Endothelial cell of umbilical vein (primary cell): ENCODE measurements at regions of chr9 and their contacts with region 1.

Region 1: DNA sequence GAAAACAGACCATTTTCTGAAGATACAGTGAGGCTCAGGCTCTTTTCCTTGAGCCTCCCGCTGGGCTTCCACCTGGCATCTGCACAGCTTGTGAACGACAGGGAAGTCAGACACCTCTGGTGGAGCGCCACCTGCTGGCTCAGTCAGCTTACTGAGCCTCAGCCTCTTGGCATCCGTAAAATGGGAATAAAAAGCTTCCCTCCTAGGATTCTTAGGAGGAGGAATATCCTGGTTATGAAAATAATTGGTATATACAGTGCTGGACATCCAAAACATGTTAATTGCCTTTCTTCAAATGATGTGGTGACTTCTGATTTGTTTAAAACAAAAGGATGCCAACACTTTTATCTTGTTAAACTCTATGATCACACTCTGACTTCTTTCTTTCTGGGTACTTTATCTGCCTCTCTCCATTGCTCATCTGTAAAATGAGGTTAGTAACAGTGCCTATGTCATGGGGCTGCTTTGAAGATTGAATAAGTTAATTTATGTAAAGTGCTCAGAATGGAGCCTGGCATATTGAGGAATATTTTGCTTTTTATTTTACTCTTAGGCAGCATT is 67.5 kb downstream of the MAMDC2 start:
- DNase-seq: peak; percentile 73
- H3K4me3 ChIP-seq: no peak overlapping the region
- H3K27ac ChIP-seq: no peak overlapping the region
- H3K4me1 ChIP-seq: peaks cover 19% of the 10 kb centered on the region
- H3K27me3 ChIP-seq: peaks cover 3 to 4% of the 10 kb centered on the region in 2 experiments
- CTCF ChIP-seq: peak; percentile 88 to 94
- POLR2A ChIP-seq: no peak

Region 2: GRCh38 chr9:69919461-69920061 is 191.6 kb before region 1 on chr9:
- CTCF ChIA-PET with region 1: interaction called, 12 read pairs
- POLR2A ChIA-PET with region 1: no interaction called
- dilution Hi-C with region 1: no loop called
- intact Hi-C with region 1: no loop called
- DNase-seq: peak; percentile 60
- H3K4me3 ChIP-seq: no peak overlapping the region
- H3K27ac ChIP-seq: no peak overlapping the region
- H3K4me1 ChIP-seq: peaks cover 5% of the 10 kb centered on the region
- H3K27me3 ChIP-seq: peaks cover 29 to 39% of the 10 kb centered on the region in 2 experiments
- CTCF ChIP-seq: peak; percentile 49 to 53
- POLR2A ChIP-seq: no peak

Region 3: GRCh38 chr9:69971643-69972449 is 139.3 kb before region 1 on chr9:
- CTCF ChIA-PET with region 1: interaction called, 597 read pairs
- POLR2A ChIA-PET with region 1: no interaction called
- dilution Hi-C with region 1: loop called (anchors 25 kb)
- intact Hi-C with region 1: loop called (anchors 1 kb)
- DNase-seq: peak; percentile 66
- H3K4me3 ChIP-seq: no peak overlapping the region
- H3K27ac ChIP-seq: no peak overlapping the region
- H3K4me1 ChIP-seq: peaks cover 19% of the 10 kb centered on the region
- H3K27me3 ChIP-seq: no peaks in the 10 kb centered on the region
- CTCF ChIP-seq: peak; percentile 86 to 87
- POLR2A ChIP-seq: no peak

Region 4: GRCh38 chr9:70053864-70054263 is 57.3 kb before region 1 on chr9:
- CTCF ChIA-PET with region 1: interaction called, 19 read pairs
- POLR2A ChIA-PET with region 1: no interaction called
- dilution Hi-C with region 1: no loop called
- intact Hi-C with region 1: no loop called
- DNase-seq: peak; percentile 84
- H3K4me3 ChIP-seq: no peak overlapping the region
- H3K27ac ChIP-seq: no peak overlapping the region
- H3K4me1 ChIP-seq: peaks cover 11% of the 10 kb centered on the region
- H3K27me3 ChIP-seq: peaks cover 0 to 1% of the 10 kb centered on the region in 2 experiments
- CTCF ChIP-seq: no peak
- POLR2A ChIP-seq: no peak

Region 5: GRCh38 chr9:70136632-70137031 is 25.5 kb after region 1 on chr9:
- CTCF ChIA-PET with region 1: interaction called, 21 read pairs
- POLR2A ChIA-PET with region 1: no interaction called
- dilution Hi-C with region 1: no loop called
- intact Hi-C with region 1: no loop called
- DNase-seq: peak; percentile 64
- H3K4me3 ChIP-seq: no peak overlapping the region
- H3K27ac ChIP-seq: no peak overlapping the region
- H3K4me1 ChIP-seq: peaks cover 22% of the 10 kb centered on the region
- H3K27me3 ChIP-seq: no peaks in the 10 kb centered on the region
- CTCF ChIP-seq: no peak
- POLR2A ChIP-seq: no peak

Region 6: DNA sequence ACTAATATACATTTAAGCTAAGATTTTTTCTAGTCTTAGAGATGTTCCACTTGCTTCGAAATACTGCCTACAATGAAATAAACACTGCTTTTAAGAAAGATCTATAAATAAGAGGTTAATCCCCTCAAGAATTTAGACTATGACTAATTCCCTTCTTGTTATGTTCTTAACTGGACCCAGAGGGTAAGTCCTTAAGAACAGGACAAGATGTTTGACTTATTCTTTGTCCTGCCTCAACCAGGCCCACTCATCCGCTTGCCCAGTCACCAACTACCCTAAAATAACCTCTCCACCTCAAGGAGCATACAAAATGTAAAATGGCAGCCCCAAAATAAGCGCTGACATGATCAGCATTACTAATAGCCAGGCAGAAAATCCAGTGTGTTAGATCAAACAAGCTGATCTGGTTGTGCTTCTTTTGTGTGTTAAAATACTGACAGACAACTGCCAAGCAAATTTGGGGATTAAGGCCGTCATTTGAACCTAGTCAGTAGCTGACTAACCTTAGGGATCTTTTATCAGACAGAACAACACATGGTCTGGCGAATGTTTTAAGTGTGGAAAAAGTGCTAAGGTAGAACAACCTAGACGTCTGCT is 54.0 kb after region 1 on chr9:
- CTCF ChIA-PET with region 1: no interaction called
- POLR2A ChIA-PET with region 1: no interaction called
- dilution Hi-C with region 1: no loop called
- intact Hi-C with region 1: no loop called
- DNase-seq: no peak
- H3K4me3 ChIP-seq: no peak overlapping the region
- H3K27ac ChIP-seq: no peak overlapping the region
- H3K4me1 ChIP-seq: no peaks in the 10 kb centered on the region
- H3K27me3 ChIP-seq: no peaks in the 10 kb centered on the region
- CTCF ChIP-seq: no peak
- POLR2A ChIP-seq: no peak